ENCODE measurements at regions of chr15 and their contacts with region 1.

Region 1: GRCh38 chr15:90931737-90932659 is at the start of gene HDDC3:
- DNase-seq: peak; percentile 93
- H3K4me3 Mint-ChIP-seq: peak within 1 kb of the TSS; percentile 95
- H3K27ac Mint-ChIP-seq: peak within 1 kb of the TSS; percentile 96
- H3K4me1 Mint-ChIP-seq: peaks cover 35% of the 10 kb centered on the region
- H3K27me3 Mint-ChIP-seq: no peaks in the 10 kb centered on the region
- CTCF ChIP-seq: peak; percentile 87
- total RNA-seq, gene HDDC3: 23.6 and 25.5 TPM in 2 replicates

Region 2: GRCh38 chr15:90886041-90886614 is 45.9 kb before region 1 on chr15:
- CTCF ChIA-PET with region 1: interaction called, 10 read pairs
- POLR2A ChIA-PET with region 1: no interaction called
- intact Hi-C with region 1: no loop called
- DNase-seq: peak; percentile 55
- H3K4me3 Mint-ChIP-seq: no peak overlapping the region
- H3K27ac Mint-ChIP-seq: no peak overlapping the region
- H3K4me1 Mint-ChIP-seq: no peaks in the 10 kb centered on the region
- H3K27me3 Mint-ChIP-seq: no peaks in the 10 kb centered on the region
- CTCF ChIP-seq: peak; percentile 98

Region 3: DNA sequence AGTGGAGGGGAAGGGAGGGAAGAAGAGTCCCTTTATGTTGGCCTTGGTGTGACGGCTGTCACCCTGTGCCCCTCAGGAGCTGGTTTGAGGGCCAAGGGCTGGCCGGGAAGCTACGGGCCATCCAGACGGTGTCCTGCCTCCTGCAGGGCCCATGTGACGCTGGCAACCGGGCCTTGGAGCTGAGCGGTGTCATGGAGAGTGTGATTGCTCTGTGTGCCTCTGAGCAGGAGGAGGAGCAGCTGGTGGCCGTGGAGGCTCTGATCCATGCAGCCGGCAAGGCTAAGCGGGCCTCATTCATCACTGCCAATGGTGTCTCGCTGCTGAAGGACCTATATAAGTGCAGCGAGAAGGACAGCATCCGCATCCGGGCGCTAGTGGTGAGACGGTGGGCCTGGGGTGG is 14.5 kb after region 1 on chr15:
- CTCF ChIA-PET with region 1: interaction called, 108 read pairs
- POLR2A ChIA-PET with region 1: interaction called, 9 read pairs
- intact Hi-C with region 1: no loop called
- DNase-seq: no peak
- H3K4me3 Mint-ChIP-seq: no peak overlapping the region
- H3K27ac Mint-ChIP-seq: no peak overlapping the region
- H3K4me1 Mint-ChIP-seq: no peaks in the 10 kb centered on the region
- H3K27me3 Mint-ChIP-seq: no peaks in the 10 kb centered on the region
- CTCF ChIP-seq: no peak

Region 4: DNA sequence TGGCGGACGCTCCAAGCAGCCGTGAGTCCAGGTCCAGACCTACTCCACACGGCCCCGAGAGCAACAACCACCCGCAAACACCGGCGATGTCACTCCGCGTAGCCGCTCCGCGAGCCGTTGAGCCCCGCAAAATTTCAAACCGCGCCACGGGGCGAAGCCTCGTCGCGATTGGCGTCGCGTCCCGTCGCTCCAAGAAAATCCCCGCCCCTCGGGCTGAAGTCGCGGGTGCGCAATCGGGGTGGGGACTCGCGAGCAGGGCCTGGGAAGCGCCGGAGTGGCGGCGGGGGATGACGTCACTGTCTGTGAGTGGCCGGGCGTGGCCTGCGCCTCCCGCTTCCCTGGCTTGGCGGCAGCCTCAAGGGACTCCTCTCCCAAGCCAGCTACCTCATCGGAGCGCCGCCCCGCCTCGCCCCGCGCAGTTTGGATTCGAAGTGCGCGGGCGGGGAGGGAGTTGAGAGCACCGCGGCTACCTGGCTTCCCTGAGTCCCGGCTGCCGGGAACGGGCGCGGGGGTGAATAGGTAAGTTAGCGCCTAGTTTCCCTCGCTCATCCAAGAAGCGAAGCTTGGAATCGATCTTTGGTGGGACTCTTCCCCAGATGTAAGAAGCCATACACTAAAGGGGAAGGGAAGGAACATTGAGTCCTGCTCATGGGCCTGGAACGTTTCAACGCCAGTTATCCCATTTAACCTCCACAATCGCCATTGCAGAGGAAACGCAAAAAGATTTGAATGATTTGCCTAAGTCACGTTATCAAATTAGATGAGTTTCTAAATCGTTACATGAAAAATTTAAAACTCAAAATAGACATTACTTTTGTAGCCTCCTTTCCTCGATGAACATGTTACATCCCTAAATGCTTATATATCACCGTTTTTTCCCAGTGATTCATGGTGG is 62.7 kb after region 1 on chr15 and contains the start of gene PRC1:
- CTCF ChIA-PET with region 1: interaction called, 3 read pairs
- POLR2A ChIA-PET with region 1: interaction called, 20 read pairs
- intact Hi-C with region 1: no loop called
- DNase-seq: peak; percentile 99
- H3K4me3 Mint-ChIP-seq: peak within 1 kb of the TSS; percentile 88
- H3K27ac Mint-ChIP-seq: peak within 1 kb of the TSS; percentile 98
- H3K4me1 Mint-ChIP-seq: peaks cover 9% of the 10 kb centered on the region
- H3K27me3 Mint-ChIP-seq: no peaks in the 10 kb centered on the region
- CTCF ChIP-seq: no peak
- total RNA-seq, gene PRC1: 83.1 and 125 TPM in 2 replicates

Region 5: DNA sequence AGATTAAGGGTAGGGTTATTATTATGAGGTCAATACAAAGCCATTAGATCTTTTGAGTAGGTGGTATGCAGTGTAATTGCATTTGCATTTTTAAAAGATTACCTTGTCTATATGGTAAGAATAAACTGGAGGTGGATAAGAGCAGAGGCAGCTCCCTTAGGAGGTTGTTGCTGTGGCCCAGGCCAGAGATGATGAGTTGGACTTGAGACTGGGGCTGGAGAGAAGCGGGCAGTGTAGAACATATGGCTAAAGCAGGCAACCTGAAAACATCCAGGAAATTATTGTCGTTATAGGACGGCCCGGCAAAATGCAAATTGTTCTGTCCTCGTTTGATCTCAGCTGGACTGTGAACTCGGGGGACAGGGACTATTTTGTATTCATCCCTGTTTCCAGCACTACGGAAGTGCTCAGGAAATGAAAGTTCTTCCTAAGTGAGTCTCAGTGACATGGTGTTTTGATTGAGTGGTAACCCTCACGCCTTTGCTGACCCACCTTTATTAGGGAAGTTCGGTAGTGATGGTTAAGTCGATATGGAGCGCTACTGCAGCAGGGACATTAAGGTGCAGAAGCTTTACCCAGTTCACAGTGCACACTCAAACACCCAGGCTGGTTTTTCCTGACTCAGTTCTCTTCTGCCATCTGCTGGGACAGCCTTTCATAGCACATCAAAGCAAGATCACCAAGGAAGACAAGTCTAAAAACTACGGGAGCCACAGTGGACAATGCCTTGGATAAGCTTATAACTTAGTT is 117.6 kb after region 1 on chr15:
- CTCF ChIA-PET with region 1: interaction called, 27 read pairs
- POLR2A ChIA-PET with region 1: interaction called, 3 read pairs
- intact Hi-C with region 1: no loop called
- DNase-seq: peak; percentile 77
- H3K4me3 Mint-ChIP-seq: no peak overlapping the region
- H3K27ac Mint-ChIP-seq: no peak overlapping the region
- H3K4me1 Mint-ChIP-seq: no peaks in the 10 kb centered on the region
- H3K27me3 Mint-ChIP-seq: peaks cover 33% of the 10 kb centered on the region
- CTCF ChIP-seq: peak; percentile 52

Region 6: DNA sequence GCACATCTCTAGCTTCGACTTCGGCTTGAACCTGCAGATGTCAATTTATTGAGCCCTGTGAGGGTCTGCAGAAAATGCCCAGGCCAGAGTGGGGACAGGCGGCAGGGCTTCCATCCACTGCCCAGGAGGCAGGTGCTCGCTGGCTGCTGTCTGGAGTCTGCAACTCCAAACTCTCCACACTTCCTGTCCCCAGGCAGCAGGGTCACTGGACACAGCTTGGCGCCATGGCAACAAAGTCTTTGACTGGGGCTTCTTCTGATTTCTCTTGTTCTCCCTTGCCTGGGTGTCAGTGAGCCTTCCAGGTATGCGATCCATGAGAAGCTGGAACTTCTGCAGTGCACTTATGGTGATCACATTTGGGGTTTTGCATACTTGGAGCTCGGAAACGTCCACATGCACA is 201.5 kb after region 1 on chr15:
- CTCF ChIA-PET with region 1: no interaction called
- POLR2A ChIA-PET with region 1: no interaction called
- intact Hi-C with region 1: no loop called
- DNase-seq: no peak
- H3K4me3 Mint-ChIP-seq: no peak overlapping the region
- H3K27ac Mint-ChIP-seq: no peak overlapping the region
- H3K4me1 Mint-ChIP-seq: no peaks in the 10 kb centered on the region
- H3K27me3 Mint-ChIP-seq: no peaks in the 10 kb centered on the region
- CTCF ChIP-seq: no peak

Measured in MCF 10A (cell line).